Transverse colon (tissue), 4 donors: ENCODE measurements at regions of chr7 and their contacts with region 1.

Region 1: GRCh38 chr7:111486472-111487142 is 75.7 kb downstream of the IMMP2L start:
- DNase-seq: no peak
- H3K4me3 ChIP-seq: no peak overlapping the region
- H3K27ac ChIP-seq: no peak overlapping the region
- H3K4me1 ChIP-seq: no peaks in the 10 kb centered on the region
- H3K27me3 ChIP-seq: no peaks in the 10 kb centered on the region
- CTCF ChIP-seq: peak; percentile 46 to 64 (median 63)
- EP300 ChIP-seq: no peak
- POLR2A ChIP-seq: no peak

Region 2: GRCh38 chr7:109844362-109844761 is 1642.2 kb before region 1 on chr7:
- in situ Hi-C with region 1: loop called in 1 of 4 experiments (anchors 25 kb)
- intact Hi-C with region 1: no loop called
- DNase-seq: no peak
- H3K4me3 ChIP-seq: no peak overlapping the region
- H3K27ac ChIP-seq: no peak overlapping the region
- H3K4me1 ChIP-seq: no peaks in the 10 kb centered on the region
- H3K27me3 ChIP-seq: no peaks in the 10 kb centered on the region
- CTCF ChIP-seq: peak in 4 of 5 experiments; percentile 22 to 26 (median 23)
- EP300 ChIP-seq: no peak
- POLR2A ChIP-seq: no peak

Region 3: GRCh38 chr7:111089822-111090426 is 396.7 kb before region 1 on chr7:
- in situ Hi-C with region 1: loop called (anchors 10 to 25 kb)
- intact Hi-C with region 1: loop called (anchors 10 kb)
- DNase-seq: no peak
- H3K4me3 ChIP-seq: no peak overlapping the region
- H3K27ac ChIP-seq: no peak overlapping the region
- H3K4me1 ChIP-seq: peaks cover 0 to 12% (median 4%) of the 10 kb centered on the region in 4 donors
- H3K27me3 ChIP-seq: no peaks in the 10 kb centered on the region
- CTCF ChIP-seq: peak; percentile 42 to 83 (median 72)
- EP300 ChIP-seq: no peak
- POLR2A ChIP-seq: no peak

Region 4: DNA sequence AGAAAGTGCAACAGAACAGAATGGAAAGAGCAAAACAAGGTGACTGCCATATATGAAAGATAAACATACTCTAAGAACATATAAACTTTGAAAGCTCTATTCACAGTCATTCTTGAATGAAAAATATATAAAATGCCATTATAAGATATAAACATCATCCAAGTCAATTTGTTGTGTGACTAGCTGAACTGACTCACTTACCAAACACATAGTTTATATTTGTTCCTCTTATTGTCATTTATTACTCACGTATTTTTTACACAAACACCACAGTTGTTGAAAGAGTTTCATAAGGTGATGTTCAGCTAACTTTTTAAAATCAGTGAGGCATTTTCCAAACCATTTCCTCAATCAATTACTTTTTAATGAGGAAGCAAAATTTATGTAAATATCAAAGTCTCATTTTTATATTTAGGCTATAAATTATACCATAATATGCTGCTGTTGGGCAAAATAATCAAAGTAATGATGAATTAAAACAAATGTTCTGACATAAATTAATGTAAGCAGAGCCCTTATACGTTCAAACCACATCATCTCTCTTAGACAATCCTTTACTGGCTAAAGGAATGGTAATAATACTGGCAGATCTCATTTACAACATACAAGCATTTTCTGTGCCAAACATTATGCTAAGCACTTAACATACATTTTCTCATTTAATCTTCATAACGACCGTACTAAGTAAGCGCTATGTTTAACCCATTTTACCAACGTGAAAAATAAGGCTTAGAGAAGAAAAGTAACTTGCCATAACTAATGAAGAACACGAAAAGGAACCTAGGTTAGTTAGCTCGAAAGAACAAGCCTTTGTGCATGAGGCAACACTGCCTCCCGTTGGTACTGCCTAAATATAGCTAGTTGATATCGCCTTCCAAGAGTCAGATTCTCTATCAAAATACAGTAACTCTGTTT is 388.3 kb before region 1 on chr7:
- in situ Hi-C with region 1: loop called in 3 of 4 experiments (anchors 25 kb)
- intact Hi-C with region 1: loop called (anchors 10 kb)
- DNase-seq: peak; percentile 10
- H3K4me3 ChIP-seq: no peak overlapping the region
- H3K27ac ChIP-seq: no peak overlapping the region
- H3K4me1 ChIP-seq: peaks cover 0 to 6% (median 0%) of the 10 kb centered on the region in 4 donors
- H3K27me3 ChIP-seq: no peaks in the 10 kb centered on the region
- CTCF ChIP-seq: peak in 4 of 5 experiments; percentile 33 to 47 (median 39)
- EP300 ChIP-seq: no peak
- POLR2A ChIP-seq: no peak

Region 5: GRCh38 chr7:111540199-111540815 is 53.7 kb after region 1 on chr7:
- in situ Hi-C with region 1: no loop called
- intact Hi-C with region 1: no loop called
- DNase-seq: no peak
- H3K4me3 ChIP-seq: no peak overlapping the region
- H3K27ac ChIP-seq: no peak overlapping the region
- H3K4me1 ChIP-seq: no peaks in the 10 kb centered on the region
- H3K27me3 ChIP-seq: no peaks in the 10 kb centered on the region
- CTCF ChIP-seq: no peak
- EP300 ChIP-seq: no peak
- POLR2A ChIP-seq: no peak